ENCODE measurements at regions of chr7 and their contacts with region 1.

Region 1: DNA sequence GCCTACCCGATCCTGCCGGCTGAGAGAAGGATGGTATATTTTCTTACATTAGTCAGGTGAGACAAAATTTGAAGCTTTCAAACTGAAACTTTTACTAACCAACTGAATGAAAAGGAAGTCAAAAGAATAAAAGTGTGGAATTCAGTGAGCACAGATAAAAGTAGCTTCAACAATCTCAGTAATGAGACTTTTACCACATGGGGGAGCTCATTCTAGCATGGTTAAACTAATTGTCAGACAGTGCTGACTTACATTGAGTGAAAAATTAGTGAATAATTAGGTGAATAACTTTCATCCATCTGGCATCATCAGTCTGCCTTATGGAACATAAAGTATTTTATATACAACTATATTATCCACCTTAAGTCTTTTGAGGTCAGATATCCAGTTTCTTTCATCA is 8.4 kb downstream of the FAM237B start:
- DNase-seq: no peak
- H3K4me3 ChIP-seq: no peak overlapping the region
- H3K27ac ChIP-seq: no peak overlapping the region
- H3K4me1 ChIP-seq: no peaks in the 10 kb centered on the region
- H3K27me3 ChIP-seq: no peaks in the 10 kb centered on the region
- CTCF ChIP-seq: peak in 1 of 3 experiments; percentile 12
- EP300 ChIP-seq: no peak
- POLR2A ChIP-seq: no peak

Region 2: DNA sequence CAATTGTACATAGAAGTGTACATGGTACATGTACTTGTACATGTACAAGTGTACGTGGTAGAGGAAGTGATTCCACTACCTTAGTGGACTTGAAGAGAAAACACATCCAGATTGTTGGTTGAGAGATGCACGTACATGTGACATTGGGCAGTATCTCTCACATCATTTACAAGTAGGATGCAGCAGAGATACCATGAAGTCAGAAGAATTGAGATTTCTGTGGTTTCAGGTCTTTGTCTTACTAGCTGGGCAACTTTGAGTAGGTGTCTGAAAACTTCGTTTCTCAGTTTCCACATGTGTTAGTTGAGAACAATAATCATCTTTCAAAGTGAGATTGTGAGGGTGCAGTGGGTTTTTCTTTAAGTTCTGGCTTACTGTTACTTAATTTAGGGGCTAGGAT is 112.0 kb after region 1 on chr7:
- intact Hi-C with region 1: loop called (anchors 10 kb)
- DNase-seq: no peak
- H3K4me3 ChIP-seq: no peak overlapping the region
- H3K27ac ChIP-seq: no peak overlapping the region
- H3K4me1 ChIP-seq: peaks cover 0 to 3% (median 0%) of the 10 kb centered on the region in 4 donors
- H3K27me3 ChIP-seq: no peaks in the 10 kb centered on the region
- CTCF ChIP-seq: no peak
- EP300 ChIP-seq: no peak
- POLR2A ChIP-seq: no peak

Measured in esophagus muscularis mucosa (tissue), 4 donors.